Left cardiac atrium (tissue), 4 donors: ENCODE measurements at regions of chr4 and their contacts with region 1.

Region 1: GRCh38 chr4:76305971-76306881 is at the start of gene STBD1:
- DNase-seq: peak; percentile 85
- ATAC-seq: peak; percentile 85 to 93
- total RNA-seq, gene STBD1: 27.2 to 36.7 TPM

Region 2: GRCh38 chr4:76198411-76199237 is 107.6 kb before region 1 on chr4:
- intact Hi-C with region 1: loop called in 1 of 2 experiments (anchors 10 kb)
- DNase-seq: peak; percentile 56
- ATAC-seq: peak; percentile 60 to 82

Region 3: GRCh38 chr4:76420762-76421581 is 114.7 kb after region 1 on chr4 and contains the start of gene CCDC158:
- intact Hi-C with region 1: loop called in 1 of 2 experiments (anchors 5 kb)
- DNase-seq: peak; percentile 39
- ATAC-seq: peak; percentile 92
- total RNA-seq, gene CCDC158: 0.62 to 0.68 TPM

Region 4: DNA sequence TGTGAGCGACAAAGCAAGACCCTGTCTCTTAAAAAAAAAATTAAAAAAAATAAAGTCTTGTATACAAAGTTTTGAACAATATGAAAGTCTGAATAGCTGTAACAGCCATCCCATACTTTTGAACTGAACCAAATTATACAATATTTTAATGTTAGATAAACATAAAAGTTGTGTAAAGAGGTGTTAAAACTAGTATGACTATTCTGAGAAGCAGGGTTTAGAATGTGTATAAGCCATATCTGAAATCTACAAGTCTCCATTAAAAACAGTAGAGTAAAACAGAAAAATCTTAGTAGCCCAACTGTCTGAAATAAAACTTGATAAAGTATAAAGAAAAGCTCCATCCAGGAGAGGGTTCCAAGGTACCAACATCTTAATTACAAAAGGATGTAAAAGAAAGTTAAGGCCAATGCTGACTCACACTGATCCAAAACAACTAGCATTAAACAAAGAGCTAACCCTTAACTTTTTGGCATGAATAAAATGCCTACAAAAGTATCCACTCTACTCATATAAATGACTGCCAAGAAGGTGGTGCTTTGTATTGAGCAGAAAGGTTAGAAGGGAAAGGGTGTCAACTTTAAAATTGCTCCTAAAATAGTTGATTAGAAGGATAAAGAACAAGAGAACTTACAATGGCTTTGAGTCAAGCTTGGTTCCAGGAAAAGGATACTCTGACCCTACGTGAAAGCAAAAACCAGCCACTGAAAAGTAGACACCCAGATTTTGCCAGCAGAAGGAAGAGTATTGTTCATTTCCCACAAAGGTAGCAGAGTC is 1494.4 kb after region 1 on chr4:
- intact Hi-C with region 1: no loop called
- DNase-seq: no peak
- ATAC-seq: peak; percentile 44 to 78